Heart left ventricle (tissue), 16 donors: ENCODE measurements at regions of chr4 and their contacts with region 1.

Region 1: GRCh38 chr4:153791746-153792617 is 3.1 kb upstream of the SFRP2 start:
- DNase-seq: peak in 3 of 5 donors; percentile 32 to 73 (median 34)
- ATAC-seq: peak in 2 of 4 donors; percentile 45 to 64
- H3K4me3 ChIP-seq: peak overlapping the region in 10 of 12 donors; percentile 9 to 43 (median 30)
- H3K27ac ChIP-seq: no peak overlapping the region
- H3K4me1 ChIP-seq: peaks cover 3 to 36% (median 24%) of the 10 kb centered on the region in 12 donors
- H3K27me3 ChIP-seq: peaks cover 38 to 95% (median 66%) of the 10 kb centered on the region in 9 donors
- CTCF ChIP-seq: peak in 8 of 12 donors; percentile 11 to 43 (median 26)
- POLR2A ChIP-seq: no peak

Region 2: GRCh38 chr4:153950100-153950979 is 158.4 kb after region 1 on chr4:
- intact Hi-C with region 1: no loop called
- DNase-seq: no peak
- ATAC-seq: no peak
- H3K4me3 ChIP-seq: no peak overlapping the region
- H3K27ac ChIP-seq: no peak overlapping the region
- H3K4me1 ChIP-seq: no peaks in the 10 kb centered on the region
- H3K27me3 ChIP-seq: peaks cover 0 to 7% (median 0%) of the 10 kb centered on the region in 9 donors
- CTCF ChIP-seq: no peak
- POLR2A ChIP-seq: no peak

Region 3: GRCh38 chr4:154018659-154019058 is 226.7 kb after region 1 on chr4:
- intact Hi-C with region 1: loop called in 5 of 10 experiments (anchors 2 to 10 kb)
- DNase-seq: no peak
- ATAC-seq: no peak
- H3K4me3 ChIP-seq: no peak overlapping the region
- H3K27ac ChIP-seq: no peak overlapping the region
- H3K4me1 ChIP-seq: no peaks in the 10 kb centered on the region
- H3K27me3 ChIP-seq: peaks cover 0 to 3% (median 0%) of the 10 kb centered on the region in 9 donors
- CTCF ChIP-seq: peak in 1 of 12 donors; percentile 3
- POLR2A ChIP-seq: no peak

Region 4: GRCh38 chr4:154024097-154024694 is 232.2 kb after region 1 on chr4:
- intact Hi-C with region 1: loop called in 4 of 10 experiments (anchors 5 to 10 kb)
- DNase-seq: no peak
- ATAC-seq: no peak
- H3K4me3 ChIP-seq: no peak overlapping the region
- H3K27ac ChIP-seq: no peak overlapping the region
- H3K4me1 ChIP-seq: no peaks in the 10 kb centered on the region
- H3K27me3 ChIP-seq: peaks cover 0 to 3% (median 0%) of the 10 kb centered on the region in 9 donors
- CTCF ChIP-seq: peak in 3 of 12 donors; percentile 18 to 38 (median 33)
- POLR2A ChIP-seq: no peak

Region 5: GRCh38 chr4:154049457-154050181 is 257.6 kb after region 1 on chr4:
- intact Hi-C with region 1: loop called in 1 of 10 experiments (anchors 10 kb)
- DNase-seq: no peak
- ATAC-seq: no peak
- H3K4me3 ChIP-seq: no peak overlapping the region
- H3K27ac ChIP-seq: no peak overlapping the region
- H3K4me1 ChIP-seq: no peaks in the 10 kb centered on the region
- H3K27me3 ChIP-seq: no peaks in the 10 kb centered on the region
- CTCF ChIP-seq: no peak
- POLR2A ChIP-seq: no peak

Region 6: DNA sequence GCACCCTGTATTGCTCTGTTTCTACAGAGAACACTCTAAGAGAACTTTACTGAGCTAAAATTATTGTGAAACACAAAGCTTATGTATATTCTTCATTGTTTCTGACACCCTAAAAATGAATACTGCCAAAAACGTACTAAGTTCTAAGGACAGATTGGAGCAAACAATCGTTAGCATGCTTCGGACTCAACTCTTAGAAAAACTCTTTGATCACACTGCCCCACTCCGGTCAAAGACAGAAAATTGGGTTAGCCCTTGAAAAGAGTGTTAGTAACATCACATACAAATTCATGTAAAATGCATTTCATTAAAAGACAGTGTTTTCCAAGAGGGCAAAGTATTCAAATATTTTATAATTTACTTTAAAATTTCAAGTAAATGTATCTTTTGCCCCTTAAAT is 522.3 kb after region 1 on chr4:
- intact Hi-C with region 1: loop called in 5 of 10 experiments (anchors 5 to 10 kb)
- DNase-seq: no peak
- ATAC-seq: no peak
- H3K4me3 ChIP-seq: no peak overlapping the region
- H3K27ac ChIP-seq: no peak overlapping the region
- H3K4me1 ChIP-seq: no peaks in the 10 kb centered on the region
- H3K27me3 ChIP-seq: no peaks in the 10 kb centered on the region
- CTCF ChIP-seq: peak in 3 of 12 donors; percentile 13 to 19 (median 15)
- POLR2A ChIP-seq: no peak

Region 7: GRCh38 chr4:154506253-154506652 is 714.3 kb after region 1 on chr4:
- intact Hi-C with region 1: loop called in 3 of 10 experiments (anchors 10 kb)
- DNase-seq: no peak
- ATAC-seq: no peak
- H3K4me3 ChIP-seq: no peak overlapping the region
- H3K27ac ChIP-seq: no peak overlapping the region
- H3K4me1 ChIP-seq: no peaks in the 10 kb centered on the region
- H3K27me3 ChIP-seq: peaks cover 0 to 20% (median 3%) of the 10 kb centered on the region in 9 donors
- CTCF ChIP-seq: peak in 11 of 12 donors; percentile 14 to 55 (median 39)
- POLR2A ChIP-seq: no peak